CD4-positive, alpha-beta memory T cell (primary cell): ENCODE measurements at regions of chr2 and their contacts with region 1.

Region 1: GRCh38 chr2:101361121-101361870 is 26.0 kb downstream of the CREG2 start:
- DNase-seq: peak in 4 of 5 donors; percentile 24 to 38 (median 35)
- H3K4me3 ChIP-seq: peak overlapping the region in 1 of 2 donors; percentile 46
- H3K4me3 Mint-ChIP-seq: peak overlapping the region in 7 of 8 donors; percentile 53 to 81 (median 74)
- H3K27ac ChIP-seq: peak overlapping the region; percentile 34
- H3K27ac Mint-ChIP-seq: peak overlapping the region; percentile 15 to 93 (median 80)
- H3K4me1 ChIP-seq: peaks cover 33% of the 10 kb centered on the region
- H3K4me1 Mint-ChIP-seq: peaks cover 23 to 37% (median 31%) of the 10 kb centered on the region in 4 donors
- H3K27me3 ChIP-seq: no peaks in the 10 kb centered on the region
- H3K27me3 Mint-ChIP-seq: no peaks in the 10 kb centered on the region

Region 2: DNA sequence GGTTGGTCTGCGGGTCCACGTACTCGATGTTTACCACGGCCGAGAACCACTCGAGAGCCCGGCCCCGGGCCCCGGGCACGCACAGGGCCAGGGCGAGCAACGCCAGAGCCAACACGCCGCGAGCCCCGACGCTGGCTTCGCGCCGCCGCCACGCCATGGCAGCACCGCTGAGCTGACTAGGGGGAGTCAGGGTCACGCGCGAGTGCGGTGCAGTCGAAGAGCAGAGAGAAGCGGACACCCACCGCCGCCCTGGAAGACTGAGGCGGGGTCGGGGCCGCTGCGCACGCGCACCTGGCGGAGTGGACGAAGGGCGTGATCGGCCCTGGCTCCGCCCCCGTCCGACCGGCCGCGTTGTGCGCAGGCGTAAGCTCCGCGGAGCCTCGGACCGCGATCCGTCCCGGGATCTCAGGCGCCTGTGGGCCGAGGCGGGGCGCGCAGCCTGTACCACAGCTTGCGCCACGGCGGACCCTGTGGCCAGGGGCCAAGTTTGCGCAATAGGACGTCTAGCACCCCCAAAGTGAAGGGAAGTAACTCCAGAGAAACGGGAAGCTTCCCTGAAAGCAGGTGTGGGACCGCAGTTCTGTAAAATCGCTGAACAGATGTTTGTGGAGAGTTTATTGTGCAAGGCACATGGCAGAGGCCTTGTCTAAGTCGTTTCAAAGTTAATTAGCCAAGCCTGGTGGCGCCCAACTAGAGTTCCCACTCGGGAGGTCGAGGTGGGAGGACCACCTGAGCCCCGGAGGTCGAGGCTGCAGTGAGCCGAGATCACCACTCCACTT is 52.7 kb before region 1 on chr2 and contains the start of gene RNF149:
- CTCF ChIA-PET with region 1: interaction called, 7 read pairs
- POLR2A ChIA-PET with region 1: interaction called, 13 read pairs
- intact Hi-C with region 1: no loop called
- DNase-seq: peak; percentile 89 to 92 (median 90)
- H3K4me3 ChIP-seq: peak within 1 kb of the TSS; percentile 68 to 92
- H3K4me3 Mint-ChIP-seq: peak within 1 kb of the TSS; percentile 93 to 100 (median 100)
- H3K27ac ChIP-seq: peak within 1 kb of the TSS; percentile 86
- H3K27ac Mint-ChIP-seq: peak within 1 kb of the TSS; percentile 96 to 100 (median 99)
- H3K4me1 ChIP-seq: peaks cover 72% of the 10 kb centered on the region
- H3K4me1 Mint-ChIP-seq: peaks cover 53 to 95% (median 67%) of the 10 kb centered on the region in 4 donors
- H3K27me3 ChIP-seq: no peaks in the 10 kb centered on the region
- H3K27me3 Mint-ChIP-seq: no peaks in the 10 kb centered on the region
- total RNA-seq, gene RNF149: 138 to 154 TPM

Region 3: DNA sequence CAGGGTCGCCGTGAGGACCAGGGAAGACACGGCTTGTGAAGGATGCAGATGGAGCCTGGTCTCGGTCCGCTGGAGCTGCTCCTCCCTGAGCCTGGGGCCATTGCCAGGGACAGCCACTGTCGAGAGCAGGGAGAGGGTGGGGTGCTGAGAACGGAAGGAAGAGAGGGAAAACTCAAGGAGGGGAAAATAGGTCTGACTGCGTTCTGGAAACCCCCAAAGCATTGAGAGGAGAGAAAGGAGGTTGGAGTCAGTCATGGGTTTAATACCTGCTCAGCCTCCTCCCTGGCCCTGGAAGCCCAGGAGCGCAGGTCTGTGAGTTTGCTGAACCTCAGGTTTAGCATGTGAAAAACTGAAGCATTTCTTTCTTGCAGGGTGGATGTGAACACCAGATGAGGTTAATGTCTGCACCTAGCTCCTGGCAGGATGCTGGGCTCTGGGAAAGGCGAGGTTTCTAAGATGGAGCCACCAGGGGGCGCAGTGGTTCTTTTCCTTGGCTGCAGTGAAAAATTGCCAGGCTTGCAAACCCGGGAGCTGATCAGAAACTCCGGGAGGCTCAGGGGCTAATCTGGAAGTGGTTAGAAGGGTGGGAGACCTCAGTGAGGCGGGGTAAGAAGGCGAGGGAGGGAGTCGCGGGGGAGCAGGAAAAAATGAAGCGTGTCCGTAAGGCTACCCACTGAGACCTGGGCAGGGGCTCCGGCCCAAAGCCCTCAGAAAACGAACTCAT is 19.2 kb before region 1 on chr2:
- CTCF ChIA-PET with region 1: interaction called, 96 read pairs
- POLR2A ChIA-PET with region 1: interaction called, 12 read pairs
- intact Hi-C with region 1: no loop called
- DNase-seq: peak; percentile 59 to 66 (median 62)
- H3K4me3 ChIP-seq: no peak overlapping the region
- H3K4me3 Mint-ChIP-seq: peak overlapping the region in 4 of 8 donors; percentile 21 to 58 (median 34)
- H3K27ac ChIP-seq: no peak overlapping the region
- H3K27ac Mint-ChIP-seq: peak overlapping the region in 5 of 7 donors; percentile 25 to 75 (median 65)
- H3K4me1 ChIP-seq: peaks cover 26% of the 10 kb centered on the region
- H3K4me1 Mint-ChIP-seq: peaks cover 21 to 33% (median 29%) of the 10 kb centered on the region in 4 donors
- H3K27me3 ChIP-seq: no peaks in the 10 kb centered on the region
- H3K27me3 Mint-ChIP-seq: no peaks in the 10 kb centered on the region

Region 4: DNA sequence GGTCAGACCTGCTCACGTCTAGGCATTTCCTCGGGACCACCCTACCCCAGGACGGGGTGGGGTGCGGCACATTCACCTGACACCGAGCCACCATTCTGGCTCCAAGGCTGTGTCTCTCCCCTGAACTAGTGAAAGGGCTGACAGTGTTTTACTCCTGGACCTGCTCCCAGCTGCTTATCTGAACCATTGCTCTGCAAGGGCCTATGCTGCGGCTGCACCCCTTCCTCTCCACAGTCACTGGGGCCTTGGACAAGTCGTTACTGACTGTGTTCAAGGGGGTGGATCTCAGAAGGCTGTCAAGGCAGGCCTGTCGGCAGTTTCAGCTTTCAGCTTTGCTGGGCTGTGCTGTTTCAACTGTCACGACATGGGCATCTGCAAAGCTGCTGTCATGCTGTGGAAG is 14.4 kb after region 1 on chr2:
- CTCF ChIA-PET with region 1: interaction called, 9 read pairs
- POLR2A ChIA-PET with region 1: interaction called, 11 read pairs
- intact Hi-C with region 1: no loop called
- DNase-seq: no peak
- H3K4me3 ChIP-seq: no peak overlapping the region
- H3K4me3 Mint-ChIP-seq: no peak overlapping the region
- H3K27ac ChIP-seq: no peak overlapping the region
- H3K27ac Mint-ChIP-seq: no peak overlapping the region
- H3K4me1 ChIP-seq: peaks cover 8% of the 10 kb centered on the region
- H3K4me1 Mint-ChIP-seq: peaks cover 0 to 9% (median 4%) of the 10 kb centered on the region in 4 donors
- H3K27me3 ChIP-seq: no peaks in the 10 kb centered on the region
- H3K27me3 Mint-ChIP-seq: no peaks in the 10 kb centered on the region

Region 5: GRCh38 chr2:101419096-101419663 is 57.9 kb after region 1 on chr2:
- CTCF ChIA-PET with region 1: interaction called, 11 read pairs
- POLR2A ChIA-PET with region 1: no interaction called
- intact Hi-C with region 1: no loop called
- DNase-seq: peak; percentile 59 to 66 (median 64)
- H3K4me3 ChIP-seq: no peak overlapping the region
- H3K4me3 Mint-ChIP-seq: no peak overlapping the region
- H3K27ac ChIP-seq: no peak overlapping the region
- H3K27ac Mint-ChIP-seq: no peak overlapping the region
- H3K4me1 ChIP-seq: no peaks in the 10 kb centered on the region
- H3K4me1 Mint-ChIP-seq: no peaks in the 10 kb centered on the region
- H3K27me3 ChIP-seq: no peaks in the 10 kb centered on the region
- H3K27me3 Mint-ChIP-seq: no peaks in the 10 kb centered on the region

Region 6: DNA sequence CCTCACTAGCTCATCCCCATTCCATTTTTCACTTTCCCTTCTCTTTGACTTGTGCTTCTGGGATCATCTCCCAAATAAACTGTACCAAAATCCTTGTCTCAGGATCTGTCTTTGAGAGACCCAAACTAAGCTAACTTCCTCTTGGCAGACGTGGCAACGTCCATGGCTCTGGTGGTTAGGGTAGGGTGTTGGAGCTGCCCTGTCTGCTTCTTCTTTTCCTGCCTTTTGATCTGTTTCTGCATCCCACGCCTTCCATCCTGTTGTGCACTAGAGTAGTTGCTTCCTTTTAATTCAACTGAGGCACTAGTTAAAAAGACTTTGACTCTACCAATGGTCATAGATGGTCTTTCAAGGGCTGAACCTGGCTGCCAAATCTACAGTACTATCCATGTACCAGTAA is 330.7 kb after region 1 on chr2:
- CTCF ChIA-PET with region 1: no interaction called
- POLR2A ChIA-PET with region 1: no interaction called
- intact Hi-C with region 1: no loop called
- DNase-seq: no peak
- H3K4me3 ChIP-seq: no peak overlapping the region
- H3K4me3 Mint-ChIP-seq: peak overlapping the region in 2 of 8 donors; percentile 47 to 54
- H3K27ac ChIP-seq: no peak overlapping the region
- H3K27ac Mint-ChIP-seq: peak overlapping the region in 5 of 7 donors; percentile 1 to 65 (median 13)
- H3K4me1 ChIP-seq: peaks cover 18% of the 10 kb centered on the region
- H3K4me1 Mint-ChIP-seq: peaks cover 14 to 26% (median 24%) of the 10 kb centered on the region in 4 donors
- H3K27me3 ChIP-seq: no peaks in the 10 kb centered on the region
- H3K27me3 Mint-ChIP-seq: no peaks in the 10 kb centered on the region